K562 (cell line): ENCODE measurements at regions of chr15 and their contacts with region 1.

Region 1: GRCh38 chr15:73240866-73241499 is 127.8 kb downstream of the HCN4 start:
- DNase-seq: peak; percentile 61 to 75 (median 62)
- ATAC-seq: peak; percentile 75
- H3K4me3 ChIP-seq: no peak overlapping the region
- H3K27ac ChIP-seq: no peak overlapping the region
- H3K4me1 ChIP-seq: no peaks in the 10 kb centered on the region
- H3K27me3 ChIP-seq: 0 out of 5 replicates have a peak, but pooled peaks cover 0 to 4% of the 10 kb centered on the region in 2 experiments
- CTCF ChIP-seq: peak; percentile 74 to 90 (median 77)
- EP300 ChIP-seq: no peak
- POLR2A ChIP-seq: no peak
- RAD21 ChIP-seq: peak; percentile 66 to 80

Region 2: DNA sequence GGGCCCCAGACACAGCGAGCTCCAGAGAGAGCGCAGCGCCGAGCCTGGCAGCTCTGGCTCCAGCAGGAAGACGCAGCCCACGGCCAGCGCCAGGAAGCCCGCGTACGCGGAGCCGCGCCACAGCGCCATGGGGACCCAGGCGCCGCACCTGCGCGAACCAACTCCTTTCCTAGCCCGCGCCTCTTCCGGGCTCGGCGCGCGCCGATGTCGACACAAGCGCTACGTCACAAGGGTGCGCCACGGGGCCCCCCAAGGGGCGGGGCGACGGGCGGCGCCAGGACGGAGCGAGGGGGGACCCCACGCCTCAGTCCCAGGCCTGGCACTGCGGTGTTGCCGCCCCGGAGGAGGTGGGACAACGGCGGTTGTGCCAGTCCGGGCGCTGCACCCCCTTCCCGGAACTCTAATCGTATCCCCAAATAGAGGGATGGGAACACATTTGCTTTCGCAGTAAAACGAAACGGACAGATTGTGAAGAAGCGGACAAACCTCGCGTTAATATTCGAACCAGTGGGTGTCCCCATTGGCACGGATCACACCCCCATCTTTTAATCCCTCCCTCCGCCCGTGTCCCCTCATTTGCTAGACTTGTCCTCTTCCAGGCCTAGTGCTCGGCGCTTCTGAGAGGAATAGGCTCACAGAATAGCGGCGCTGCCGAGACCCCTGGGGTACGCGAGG is 457.3 kb before region 1 on chr15 and contains the start of gene ADPGK:
- CTCF ChIA-PET with region 1: no interaction called
- POLR2A ChIA-PET with region 1: no interaction called
- in situ Hi-C with region 1: no loop called
- intact Hi-C with region 1: loop called (anchors 10 kb)
- DNase-seq: peak; percentile 93 to 98 (median 98)
- ATAC-seq: peak; percentile 91
- H3K4me3 ChIP-seq: peak within 1 kb of the TSS; percentile 98
- H3K27ac ChIP-seq: peak within 1 kb of the TSS; percentile 92
- H3K4me1 ChIP-seq: peaks cover 11 to 13% of the 10 kb centered on the region in 2 experiments; a peak in 4 of 5 replicates
- H3K27me3 ChIP-seq: no peaks in the 10 kb centered on the region
- CTCF ChIP-seq: no peak
- EP300 ChIP-seq: peak; percentile 59
- POLR2A ChIP-seq: peak; percentile 92
- RAD21 ChIP-seq: no peak
- polyA plus RNA-seq, gene ADPGK: 13.4 to 16.0 TPM

Region 3: GRCh38 chr15:73273181-73274002 is 32.4 kb after region 1 on chr15:
- CTCF ChIA-PET with region 1: interaction called, 22 read pairs
- POLR2A ChIA-PET with region 1: no interaction called
- in situ Hi-C with region 1: no loop called
- intact Hi-C with region 1: loop called (anchors 1 kb)
- DNase-seq: peak; percentile 54 to 59 (median 59)
- ATAC-seq: peak; percentile 92
- H3K4me3 ChIP-seq: no peak overlapping the region
- H3K27ac ChIP-seq: no peak overlapping the region
- H3K4me1 ChIP-seq: no peaks in the 10 kb centered on the region
- H3K27me3 ChIP-seq: peaks cover under 1 to 2% of the 10 kb centered on the region in 2 experiments; a peak in 1 of 5 replicates
- CTCF ChIP-seq: peak; percentile 67 to 73 (median 70)
- EP300 ChIP-seq: no peak
- POLR2A ChIP-seq: no peak
- RAD21 ChIP-seq: peak; percentile 60 to 80

Region 4: DNA sequence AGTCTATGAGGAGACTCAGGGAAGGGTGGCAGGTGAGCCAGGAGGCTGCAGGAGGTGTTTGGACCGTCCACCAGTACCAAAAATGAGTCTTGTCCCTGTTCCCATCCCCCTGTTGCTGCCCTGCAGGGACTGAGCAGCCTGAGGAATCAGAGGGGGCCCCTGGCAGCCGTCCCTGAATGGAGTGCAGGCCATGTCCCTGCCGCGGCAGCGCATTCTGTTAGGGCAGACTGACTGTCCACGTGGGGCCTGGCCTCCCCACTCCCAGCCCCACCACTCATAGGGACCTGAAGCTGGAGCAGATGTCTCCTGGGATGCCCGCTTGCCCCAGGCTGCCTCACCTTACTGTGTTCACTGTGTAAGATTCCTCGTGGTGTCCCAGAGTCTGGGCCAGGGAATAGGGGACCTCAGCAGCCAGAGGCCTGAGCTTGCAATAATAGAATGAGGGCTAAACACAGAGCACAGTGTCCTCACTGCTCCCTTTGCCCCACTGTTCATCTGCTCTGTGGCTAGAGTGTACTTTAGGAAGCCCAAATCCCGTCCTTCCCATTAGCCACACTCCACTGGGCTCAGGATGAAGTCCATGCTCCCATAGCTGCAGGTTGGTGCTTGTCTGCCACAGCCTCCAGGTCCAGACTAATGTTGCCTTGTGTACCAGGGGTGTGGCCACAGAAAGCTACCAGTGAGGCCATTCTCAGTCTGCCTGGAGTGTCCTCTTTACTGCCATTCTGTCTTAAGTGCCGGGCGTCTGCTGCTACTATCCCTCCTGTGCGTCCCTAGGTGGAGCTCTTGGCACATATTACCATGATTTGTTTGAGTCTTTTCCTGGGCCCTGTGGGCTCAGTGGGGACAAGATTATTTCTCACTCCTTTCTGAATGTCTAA is 64.6 kb after region 1 on chr15:
- CTCF ChIA-PET with region 1: no interaction called
- POLR2A ChIA-PET with region 1: no interaction called
- in situ Hi-C with region 1: no loop called
- intact Hi-C with region 1: no loop called
- DNase-seq: peak; percentile 26 to 74 (median 46)
- ATAC-seq: peak; percentile 93
- H3K4me3 ChIP-seq: no peak overlapping the region
- H3K27ac ChIP-seq: no peak overlapping the region
- H3K4me1 ChIP-seq: no peaks in the 10 kb centered on the region; a peak in 1 of 5 replicates
- H3K27me3 ChIP-seq: peaks cover 24 to 40% of the 10 kb centered on the region in 2 experiments; a peak in 4 of 5 replicates
- CTCF ChIP-seq: peak; percentile 74 to 82 (median 77)
- EP300 ChIP-seq: no peak
- POLR2A ChIP-seq: no peak
- RAD21 ChIP-seq: peak; percentile 61 to 81

Region 5: GRCh38 chr15:73704869-73705645 is 464.1 kb after region 1 on chr15:
- CTCF ChIA-PET with region 1: interaction called, 6 read pairs
- POLR2A ChIA-PET with region 1: no interaction called
- in situ Hi-C with region 1: no loop called
- intact Hi-C with region 1: loop called (anchors 2 kb)
- DNase-seq: peak; percentile 76 to 82 (median 78)
- ATAC-seq: peak; percentile 93
- H3K4me3 ChIP-seq: no peak overlapping the region
- H3K27ac ChIP-seq: no peak overlapping the region
- H3K4me1 ChIP-seq: no peaks in the 10 kb centered on the region
- H3K27me3 ChIP-seq: no peaks in the 10 kb centered on the region; a peak in 1 of 5 replicates
- CTCF ChIP-seq: peak; percentile 84 to 91 (median 87)
- EP300 ChIP-seq: no peak
- POLR2A ChIP-seq: no peak
- RAD21 ChIP-seq: peak; percentile 41 to 79